Mammary epithelial cell (primary cell): ENCODE measurements at regions of chr22 and their contacts with region 1.

Region 1: DNA sequence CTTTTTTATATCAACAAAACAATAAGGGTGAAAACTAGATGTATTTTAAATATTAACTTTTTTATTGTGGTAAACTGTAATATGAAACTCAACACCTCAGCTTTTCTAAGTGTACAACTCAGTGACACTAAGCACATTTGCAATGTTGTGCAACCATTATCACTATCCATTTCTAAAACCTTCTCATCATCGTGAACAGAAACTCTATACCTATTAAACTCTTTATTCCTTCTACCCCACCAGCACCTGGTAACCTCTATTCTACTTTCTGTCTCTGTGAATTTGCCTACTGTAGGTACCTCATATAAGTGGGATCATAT is 9.4 kb downstream of the HORMAD2 start:
- DNase-seq: no peak
- H3K4me3 ChIP-seq: no peak overlapping the region
- H3K27ac ChIP-seq: no peak overlapping the region
- H3K4me1 ChIP-seq: no peaks in the 10 kb centered on the region
- H3K27me3 ChIP-seq: no peaks in the 10 kb centered on the region
- CTCF ChIP-seq: no peak

Region 2: DNA sequence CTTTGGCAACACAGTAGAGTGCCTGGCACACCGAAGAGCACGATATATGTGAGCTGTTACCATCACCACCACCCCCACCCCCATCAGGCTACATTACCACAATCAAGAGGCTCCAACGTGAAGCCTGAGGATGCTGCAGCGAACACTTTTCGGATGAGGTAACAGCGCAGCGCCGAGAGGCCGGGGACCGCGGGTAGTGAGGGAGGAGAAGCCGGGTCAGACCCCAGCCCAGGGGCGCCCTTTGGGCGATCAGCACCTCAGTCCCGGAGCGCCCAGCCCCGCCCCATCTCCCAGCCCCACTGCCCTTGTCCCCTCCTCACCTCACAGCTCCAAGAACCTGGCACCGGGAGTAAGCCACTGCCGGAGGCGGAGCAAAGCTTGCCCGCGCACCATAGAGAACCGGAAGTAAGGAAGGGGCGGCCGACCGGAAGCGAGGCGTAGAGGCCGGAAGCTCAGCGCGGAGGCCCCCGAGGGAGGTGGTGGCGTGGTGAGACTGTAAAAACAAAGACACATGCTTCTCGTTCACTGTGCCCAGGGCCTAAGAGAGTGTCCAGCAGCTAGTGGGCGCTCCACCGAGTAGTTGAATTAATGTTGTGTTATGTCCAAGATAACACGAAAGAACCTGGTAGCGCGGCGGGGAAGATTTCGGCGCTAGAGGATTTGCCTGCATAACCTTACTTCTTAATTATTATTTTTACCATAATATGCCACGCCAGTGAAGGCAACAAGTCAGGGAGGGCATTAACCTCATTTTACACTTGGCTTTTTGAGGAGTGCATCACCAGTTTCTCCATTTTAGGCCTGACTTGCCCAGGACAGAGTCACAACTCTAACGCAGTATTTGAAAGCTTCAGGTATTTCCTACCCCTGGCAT is 536.0 kb before region 1 on chr22 and contains the start of gene THOC5:
- CTCF ChIA-PET with region 1: interaction called, 6 read pairs
- dilution Hi-C with region 1: no loop called
- in situ Hi-C with region 1: no loop called
- intact Hi-C with region 1: loop called (anchors 2 kb)
- DNase-seq: peak; percentile 95
- H3K4me3 ChIP-seq: peak within 1 kb of the TSS; percentile 65 to 94 (median 80)
- H3K27ac ChIP-seq: peak within 1 kb of the TSS; percentile 63
- H3K4me1 ChIP-seq: peaks cover 8% of the 10 kb centered on the region
- H3K27me3 ChIP-seq: no peaks in the 10 kb centered on the region
- CTCF ChIP-seq: peak; percentile 53 to 63
- total RNA-seq, gene THOC5: 46.3 to 56.2 TPM

Region 3: DNA sequence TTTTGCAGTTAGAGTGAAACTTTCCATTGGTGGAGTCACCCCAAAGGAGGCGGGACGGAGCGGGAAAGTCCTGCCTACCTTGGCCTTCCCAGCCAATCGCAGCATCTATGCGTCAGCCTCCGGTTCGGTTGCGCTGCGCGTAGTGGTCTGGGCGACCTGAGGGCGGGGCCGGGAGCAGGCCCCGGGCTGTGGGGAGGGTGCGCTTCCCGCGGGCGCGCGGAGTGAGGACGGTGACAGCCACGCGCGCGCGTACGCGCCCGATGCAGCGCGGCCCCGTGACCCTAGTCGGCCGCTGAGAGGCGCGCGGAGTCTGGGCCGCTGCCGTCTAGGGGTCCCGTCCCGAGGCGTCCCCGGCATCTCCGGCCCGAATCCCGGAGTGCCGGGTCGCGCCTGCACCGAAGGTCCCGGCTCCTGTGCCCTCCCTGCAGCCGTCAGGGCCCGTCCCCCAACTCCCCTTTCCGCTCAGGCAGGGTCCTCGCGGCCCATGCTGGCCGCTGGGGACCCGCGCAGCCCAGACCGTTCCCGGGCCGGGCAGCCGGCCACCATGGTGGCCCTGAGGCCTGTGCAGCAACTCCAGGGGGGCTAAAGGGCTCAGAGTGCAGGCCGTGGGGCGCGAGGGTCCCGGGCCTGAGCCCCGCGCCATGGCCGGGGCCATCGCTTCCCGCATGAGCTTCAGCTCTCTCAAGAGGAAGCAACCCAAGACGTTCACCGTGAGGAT is 486.1 kb before region 1 on chr22 and contains the start of gene NF2:
- CTCF ChIA-PET with region 1: no interaction called
- dilution Hi-C with region 1: no loop called
- in situ Hi-C with region 1: no loop called
- intact Hi-C with region 1: loop called (anchors 5 kb)
- DNase-seq: peak; percentile 99
- H3K4me3 ChIP-seq: peak within 1 kb of the TSS; percentile 76 to 90 (median 86)
- H3K27ac ChIP-seq: peak within 1 kb of the TSS; percentile 78
- H3K4me1 ChIP-seq: peaks cover 10% of the 10 kb centered on the region
- H3K27me3 ChIP-seq: no peaks in the 10 kb centered on the region
- CTCF ChIP-seq: peak in 1 of 2 donors; percentile 9
- total RNA-seq, gene NF2: 95.2 to 138 TPM

Region 4: GRCh38 chr22:29635734-29636357 is 453.8 kb before region 1 on chr22:
- CTCF ChIA-PET with region 1: interaction called, 3 read pairs
- dilution Hi-C with region 1: no loop called
- in situ Hi-C with region 1: loop called in 1 of 2 experiments (anchors 10 kb)
- intact Hi-C with region 1: loop called (anchors 1 kb)
- DNase-seq: peak; percentile 39
- H3K4me3 ChIP-seq: no peak overlapping the region
- H3K27ac ChIP-seq: no peak overlapping the region
- H3K4me1 ChIP-seq: peaks cover 3% of the 10 kb centered on the region
- H3K27me3 ChIP-seq: no peaks in the 10 kb centered on the region
- CTCF ChIP-seq: peak; percentile 56 to 76

Region 5: GRCh38 chr22:29766632-29767170 is 322.9 kb before region 1 on chr22 and contains the start of gene ZMAT5:
- CTCF ChIA-PET with region 1: interaction called, 12 read pairs
- dilution Hi-C with region 1: no loop called
- in situ Hi-C with region 1: no loop called
- intact Hi-C with region 1: no loop called
- DNase-seq: peak; percentile 97
- H3K4me3 ChIP-seq: peak within 1 kb of the TSS; percentile 72 to 97 (median 80)
- H3K27ac ChIP-seq: peak within 1 kb of the TSS; percentile 82
- H3K4me1 ChIP-seq: peaks cover 12% of the 10 kb centered on the region
- H3K27me3 ChIP-seq: no peaks in the 10 kb centered on the region
- CTCF ChIP-seq: no peak
- total RNA-seq, gene ZMAT5: 15.3 to 15.5 TPM

Region 6: DNA sequence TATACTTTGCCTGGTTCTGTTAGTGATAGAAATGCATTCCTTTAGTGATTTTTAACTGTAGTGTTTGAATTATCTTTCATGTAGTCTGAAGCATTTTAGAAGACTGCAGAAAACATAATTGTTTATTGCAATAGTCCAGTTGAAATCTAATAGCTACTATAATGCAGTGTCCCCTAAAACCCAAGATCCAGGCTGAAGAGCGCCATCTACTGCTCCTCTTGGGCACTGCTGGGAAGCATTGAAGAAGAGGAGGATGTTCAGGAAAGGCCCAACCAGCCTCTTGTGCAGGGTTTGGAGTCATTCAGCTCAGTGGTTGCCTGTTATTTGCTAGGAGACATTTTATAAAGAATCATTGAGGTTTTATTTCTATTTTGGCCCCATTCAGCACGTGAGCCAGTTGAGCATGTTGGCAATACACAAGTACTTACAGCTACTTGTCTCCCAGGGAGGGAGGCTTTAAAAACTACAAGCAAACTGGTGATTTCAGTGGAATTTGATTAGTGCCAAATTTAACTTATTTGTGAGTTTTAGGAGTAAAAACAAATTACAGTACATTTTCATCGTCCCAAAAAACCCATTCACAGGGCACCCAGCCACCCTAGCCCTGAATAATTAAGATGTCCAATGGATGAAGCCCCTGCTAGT is 84.3 kb before region 1 on chr22:
- CTCF ChIA-PET with region 1: no interaction called
- dilution Hi-C with region 1: no loop called
- in situ Hi-C with region 1: no loop called
- intact Hi-C with region 1: loop called (anchors 5 kb)
- DNase-seq: peak; percentile 57
- H3K4me3 ChIP-seq: no peak overlapping the region
- H3K27ac ChIP-seq: no peak overlapping the region
- H3K4me1 ChIP-seq: no peaks in the 10 kb centered on the region
- H3K27me3 ChIP-seq: no peaks in the 10 kb centered on the region
- CTCF ChIP-seq: peak; percentile 98 to 99

Region 7: GRCh38 chr22:30054588-30055033 is 35.0 kb before region 1 on chr22:
- CTCF ChIA-PET with region 1: no interaction called
- dilution Hi-C with region 1: no loop called
- in situ Hi-C with region 1: no loop called
- intact Hi-C with region 1: no loop called
- DNase-seq: no peak
- H3K4me3 ChIP-seq: no peak overlapping the region
- H3K27ac ChIP-seq: no peak overlapping the region
- H3K4me1 ChIP-seq: peaks cover 5% of the 10 kb centered on the region
- H3K27me3 ChIP-seq: no peaks in the 10 kb centered on the region
- CTCF ChIP-seq: no peak

Region 8: DNA sequence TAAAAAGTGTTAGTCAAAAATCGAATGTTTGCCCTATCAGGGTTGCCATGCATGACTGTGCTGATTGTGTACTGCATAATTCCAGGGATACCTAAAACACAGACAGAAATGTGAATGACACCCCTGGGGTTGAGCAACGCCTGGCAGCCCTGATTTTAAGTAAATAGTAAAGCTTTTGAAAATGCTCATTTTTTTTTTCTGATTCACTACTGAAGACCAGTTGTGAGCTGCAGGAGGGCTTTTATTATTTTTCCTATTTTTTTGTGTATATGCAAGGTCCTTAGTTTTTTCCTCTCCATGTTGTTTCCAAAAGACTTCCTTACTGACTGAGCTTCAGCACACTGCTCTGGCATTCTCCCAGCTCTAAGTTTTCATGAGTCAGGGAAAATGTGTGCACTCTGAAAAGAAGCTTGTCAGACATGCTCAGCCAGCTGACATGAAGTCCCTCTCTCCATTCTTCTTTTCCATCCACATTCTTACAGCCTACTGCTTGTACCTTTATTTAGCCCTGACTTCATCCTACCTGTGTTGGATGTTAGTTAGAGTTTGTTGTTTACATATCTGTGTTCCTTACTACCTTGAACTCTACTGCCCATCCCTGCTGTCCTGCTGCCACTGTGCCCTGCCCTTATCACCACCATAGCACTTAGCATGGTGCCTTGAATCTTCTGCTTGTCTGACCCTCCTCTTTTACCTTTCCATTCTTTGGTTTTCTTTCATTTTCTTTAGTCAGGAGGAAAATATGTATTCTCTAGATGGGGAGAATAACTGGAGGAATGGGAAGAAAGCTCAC is 70.1 kb after region 1 on chr22:
- CTCF ChIA-PET with region 1: no interaction called
- dilution Hi-C with region 1: no loop called
- in situ Hi-C with region 1: no loop called
- intact Hi-C with region 1: no loop called
- DNase-seq: peak; percentile 52
- H3K4me3 ChIP-seq: no peak overlapping the region
- H3K27ac ChIP-seq: no peak overlapping the region
- H3K4me1 ChIP-seq: no peaks in the 10 kb centered on the region
- H3K27me3 ChIP-seq: no peaks in the 10 kb centered on the region
- CTCF ChIP-seq: no peak

Region 9: DNA sequence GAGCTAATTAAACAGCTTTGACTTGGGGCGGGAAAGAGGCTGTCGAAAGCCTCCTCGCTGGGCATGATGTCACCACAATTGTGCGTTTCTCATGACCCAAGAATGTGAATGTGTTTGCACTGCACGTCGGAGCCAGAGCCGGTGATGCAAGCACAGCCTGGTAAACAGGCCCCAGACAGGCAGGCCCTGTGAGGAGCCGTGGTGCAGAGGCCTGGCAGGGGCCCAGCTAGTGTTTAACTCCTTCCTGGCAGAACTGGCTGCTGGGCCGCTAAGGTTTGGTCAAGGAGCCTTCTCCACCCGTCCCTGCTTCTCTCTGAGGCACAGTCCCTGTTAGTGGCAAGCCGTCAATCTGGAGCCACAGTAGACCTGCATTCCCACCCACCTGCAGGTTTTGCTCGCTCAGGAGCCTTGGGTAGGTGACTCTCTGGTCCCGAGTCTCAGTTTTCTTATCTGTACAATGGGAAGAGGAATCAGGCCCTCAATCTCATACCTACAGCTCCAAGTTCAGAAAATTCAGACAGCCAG is 966.1 kb after region 1 on chr22:
- CTCF ChIA-PET with region 1: no interaction called
- dilution Hi-C with region 1: no loop called
- in situ Hi-C with region 1: no loop called
- intact Hi-C with region 1: no loop called
- DNase-seq: peak; percentile 96
- H3K4me3 ChIP-seq: no peak overlapping the region
- H3K27ac ChIP-seq: peak overlapping the region; percentile 53
- H3K4me1 ChIP-seq: peaks cover 16% of the 10 kb centered on the region
- H3K27me3 ChIP-seq: no peaks in the 10 kb centered on the region
- CTCF ChIP-seq: no peak